ENCODE measurements at regions of chr3 and their contacts with region 1.

Region 1: GRCh38 chr3:197749601-197750395 is at the start of gene FYTTD1:
- DNase-seq: peak; percentile 89 to 96
- H3K4me3 ChIP-seq: peak within 1 kb of the TSS; percentile 76 to 94
- H3K27ac ChIP-seq: peak within 1 kb of the TSS; percentile 92 to 99
- H3K4me1 ChIP-seq: peaks cover 0 to 31% (median 17%) of the 10 kb centered on the region in 4 donors
- H3K27me3 ChIP-seq: no peaks in the 10 kb centered on the region
- CTCF ChIP-seq: peak; percentile 45 to 61

Region 2: GRCh38 chr3:197711973-197712707 is 37.7 kb before region 1 on chr3:
- intact Hi-C with region 1: loop called (anchors 5 kb)
- DNase-seq: peak; percentile 91 to 92
- H3K4me3 ChIP-seq: peak overlapping the region; percentile 44 to 48
- H3K27ac ChIP-seq: peak overlapping the region; percentile 80 to 84
- H3K4me1 ChIP-seq: peaks cover 0 to 31% (median 14%) of the 10 kb centered on the region in 4 donors
- H3K27me3 ChIP-seq: no peaks in the 10 kb centered on the region
- CTCF ChIP-seq: no peak

Region 3: DNA sequence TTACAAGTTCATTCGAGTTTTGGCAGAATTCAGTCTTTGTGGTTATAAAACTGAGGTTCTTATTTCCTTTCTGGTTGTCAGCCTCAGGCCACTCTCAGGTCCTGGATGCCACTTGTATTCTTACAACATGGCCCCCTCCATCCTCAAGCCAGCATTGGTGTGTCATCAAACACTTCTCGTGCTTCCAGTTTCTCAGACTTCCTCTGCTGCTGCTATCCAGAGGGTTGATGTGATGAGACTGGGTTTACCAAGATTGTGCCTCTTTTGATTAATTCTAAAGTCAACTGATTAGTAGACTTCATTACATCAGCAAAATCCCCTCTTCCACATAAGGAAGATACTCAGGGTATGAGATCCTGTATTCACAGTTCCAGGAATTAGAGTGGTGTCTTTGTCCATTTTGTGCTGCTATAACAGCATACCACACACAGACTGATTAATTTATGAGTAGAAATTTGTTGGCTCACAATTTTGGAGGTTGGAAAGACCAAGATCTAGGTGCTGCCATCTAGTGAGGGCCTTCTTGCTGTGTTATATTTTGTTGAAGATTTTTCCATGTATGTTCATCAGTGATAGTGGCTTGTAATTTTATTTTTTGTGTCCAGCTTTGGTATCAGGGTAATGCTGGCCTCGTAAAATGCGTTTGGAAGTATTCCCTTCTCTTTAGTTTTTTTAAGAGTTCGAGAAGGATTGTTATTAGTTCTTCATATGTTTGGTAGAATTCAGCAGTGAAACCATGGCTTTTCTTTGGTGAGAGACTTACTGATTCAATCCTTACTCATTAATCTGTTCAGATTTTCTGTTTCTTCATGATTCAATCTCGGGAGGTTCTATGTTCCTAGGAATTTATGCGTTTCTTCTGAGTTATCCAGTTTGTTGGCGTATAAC is 52.3 kb after region 1 on chr3:
- intact Hi-C with region 1: loop called (anchors 10 kb)
- DNase-seq: no peak
- H3K4me3 ChIP-seq: no peak overlapping the region
- H3K27ac ChIP-seq: no peak overlapping the region
- H3K4me1 ChIP-seq: peaks cover 0 to 56% (median 23%) of the 10 kb centered on the region in 4 donors
- H3K27me3 ChIP-seq: no peaks in the 10 kb centered on the region
- CTCF ChIP-seq: peak in 1 of 2 experiments; percentile 8

Region 4: DNA sequence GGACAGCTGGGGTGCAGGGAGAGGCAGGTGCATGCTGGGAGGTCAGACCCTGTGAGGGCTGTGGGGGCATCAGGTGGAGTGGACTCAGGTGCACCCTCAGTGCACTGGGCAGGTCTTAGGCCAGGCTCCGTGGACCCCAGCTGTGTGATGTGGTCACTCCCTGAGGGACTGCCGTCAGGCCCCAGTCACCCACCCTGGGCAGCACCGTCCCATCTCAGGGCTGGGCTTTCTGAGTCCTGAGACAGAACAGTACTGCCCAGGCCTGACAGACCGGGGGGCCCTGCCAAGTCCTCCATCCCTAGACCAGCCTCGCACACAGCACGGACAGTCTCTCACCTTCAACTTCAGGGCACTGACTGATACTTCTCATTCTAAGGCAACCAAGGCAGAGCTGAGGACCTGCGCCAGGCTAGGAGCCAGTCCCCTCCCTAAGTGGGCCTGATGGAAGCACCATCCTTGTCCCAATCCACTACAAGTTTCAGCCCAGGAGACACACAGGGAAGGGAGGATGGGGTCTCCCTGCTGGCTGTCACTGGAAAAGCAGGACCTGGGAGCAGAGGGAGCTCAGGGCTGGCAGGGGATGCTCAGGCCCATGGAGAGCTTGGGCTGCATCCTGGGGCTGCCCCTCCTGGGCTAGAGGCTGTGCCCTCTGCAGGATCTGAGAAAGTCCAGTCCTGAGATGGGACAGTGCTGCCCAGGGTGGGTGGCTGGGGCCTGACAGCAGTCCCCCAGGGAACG is 296.5 kb after region 1 on chr3:
- intact Hi-C with region 1: no loop called
- DNase-seq: no peak
- H3K4me3 ChIP-seq: no peak overlapping the region
- H3K27ac ChIP-seq: no peak overlapping the region
- H3K4me1 ChIP-seq: no peaks in the 10 kb centered on the region
- H3K27me3 ChIP-seq: no peaks in the 10 kb centered on the region
- CTCF ChIP-seq: no peak